Psoas muscle (tissue), 8 donors: ENCODE measurements at regions of chr19 and their contacts with region 1.

Region 1: DNA sequence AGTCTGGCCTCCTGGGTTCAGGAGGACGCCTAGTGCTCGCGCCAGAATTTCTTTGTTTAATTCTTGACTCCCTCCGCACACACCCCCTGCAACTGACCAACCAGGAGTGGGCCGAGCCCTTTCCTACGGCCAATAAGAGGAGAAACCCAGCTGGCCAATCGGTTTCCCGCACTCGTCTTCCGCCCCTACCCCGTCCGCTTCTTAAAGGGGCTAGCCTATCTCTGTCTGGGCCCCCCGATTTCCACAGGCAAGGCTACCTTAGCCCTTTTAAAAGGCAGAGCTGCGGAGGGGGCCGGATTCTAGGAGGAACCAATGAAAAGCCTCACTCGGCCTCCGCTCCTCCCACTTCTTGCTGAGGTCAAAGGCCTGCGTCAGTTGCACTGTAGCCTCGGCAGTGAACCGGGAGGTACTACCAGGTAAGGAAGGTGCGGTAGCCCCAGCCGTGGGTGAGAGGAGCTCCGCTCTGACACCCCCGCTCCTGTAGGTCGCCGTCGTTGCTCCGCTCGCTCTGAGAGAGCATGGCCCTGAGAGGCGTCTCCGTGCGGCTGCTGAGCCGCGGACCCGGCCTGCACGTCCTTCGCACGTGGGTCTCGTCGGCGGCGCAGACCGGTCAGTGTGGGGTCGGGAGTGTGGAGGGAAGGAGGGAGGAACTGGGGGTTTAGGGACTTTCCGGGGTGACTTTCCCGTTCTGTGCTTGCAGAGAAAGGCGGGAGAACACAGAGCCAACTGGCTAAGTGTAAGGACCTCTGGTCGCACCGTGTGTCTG is at the start of gene GCDH:
- DNase-seq: peak; percentile 96 to 98
- ATAC-seq: peak; percentile 98 to 99 (median 99)
- H3K4me3 ChIP-seq: peak within 1 kb of the TSS; percentile 98
- H3K27ac ChIP-seq: peak within 1 kb of the TSS; percentile 86
- H3K4me1 ChIP-seq: peaks cover 7% of the 10 kb centered on the region
- H3K27me3 ChIP-seq: no peaks in the 10 kb centered on the region
- CTCF ChIP-seq: no peak
- total RNA-seq, gene GCDH: 18.9 to 45.2 (median 31.2) TPM

Region 2: DNA sequence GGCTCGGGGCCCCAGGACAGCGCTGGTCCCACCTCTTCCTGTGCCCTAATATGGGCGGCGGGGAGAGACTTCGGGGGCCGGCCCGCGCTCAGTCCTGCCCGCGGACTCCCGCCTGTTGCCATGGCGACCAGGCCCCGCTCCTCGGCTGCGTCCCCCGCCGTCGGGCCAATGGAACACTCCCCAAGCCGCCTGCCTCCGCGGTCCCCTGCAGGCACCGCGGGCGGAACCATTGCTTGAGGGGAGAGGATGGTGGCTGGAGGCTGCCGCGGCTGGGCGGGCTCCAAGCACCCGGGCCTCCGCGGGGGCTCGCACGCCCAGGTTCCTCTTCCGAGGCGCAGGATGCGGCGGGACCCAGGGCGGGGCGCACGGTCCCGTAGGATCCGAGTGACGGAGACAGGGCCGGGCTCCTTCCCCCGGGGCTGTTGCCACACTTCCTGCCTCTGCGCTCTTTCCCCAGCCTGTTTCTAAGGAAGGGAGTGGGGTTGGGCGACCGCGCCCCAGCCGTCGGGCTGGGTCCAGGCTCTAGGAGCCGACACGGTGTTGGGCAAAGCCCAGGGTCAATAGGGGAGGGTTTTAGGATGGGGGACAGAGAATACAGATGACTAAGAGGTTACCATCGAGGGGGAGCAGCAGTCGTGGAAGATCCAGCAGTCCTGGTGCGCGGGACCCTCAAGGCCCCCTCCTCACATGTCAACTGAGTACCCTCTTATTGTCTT is 100.9 kb before region 1 on chr19:
- intact Hi-C with region 1: no loop called
- DNase-seq: peak; percentile 98
- ATAC-seq: peak; percentile 38 to 53 (median 48)
- H3K4me3 ChIP-seq: peak overlapping the region; percentile 99
- H3K27ac ChIP-seq: peak overlapping the region; percentile 99
- H3K4me1 ChIP-seq: peaks cover 29% of the 10 kb centered on the region
- H3K27me3 ChIP-seq: no peaks in the 10 kb centered on the region
- CTCF ChIP-seq: no peak

Region 3: GRCh38 chr19:12956446-12957388 is 65.7 kb after region 1 on chr19 and contains the start of gene GADD45GIP1:
- intact Hi-C with region 1: loop called in 1 of 2 experiments (anchors 5 kb)
- DNase-seq: peak; percentile 87 to 89
- ATAC-seq: peak; percentile 89 to 93 (median 90)
- H3K4me3 ChIP-seq: peak within 1 kb of the TSS; percentile 87
- H3K27ac ChIP-seq: peak within 1 kb of the TSS; percentile 92
- H3K4me1 ChIP-seq: peaks cover 38% of the 10 kb centered on the region
- H3K27me3 ChIP-seq: no peaks in the 10 kb centered on the region
- CTCF ChIP-seq: no peak
- total RNA-seq, gene GADD45GIP1: 22.4 to 35.6 (median 29.3) TPM